A673 (cell line): ENCODE measurements at regions of chr4 and their contacts with region 1.

Region 1: GRCh38 chr4:89024051-89024675 is 32.8 kb downstream of the FAM13A start:
- DNase-seq: peak; percentile 58
- H3K4me3 ChIP-seq: no peak overlapping the region
- H3K27ac ChIP-seq: no peak overlapping the region
- H3K4me1 ChIP-seq: no peaks in the 10 kb centered on the region
- H3K27me3 ChIP-seq: no peaks in the 10 kb centered on the region
- CTCF ChIP-seq: peak; percentile 61

Region 2: DNA sequence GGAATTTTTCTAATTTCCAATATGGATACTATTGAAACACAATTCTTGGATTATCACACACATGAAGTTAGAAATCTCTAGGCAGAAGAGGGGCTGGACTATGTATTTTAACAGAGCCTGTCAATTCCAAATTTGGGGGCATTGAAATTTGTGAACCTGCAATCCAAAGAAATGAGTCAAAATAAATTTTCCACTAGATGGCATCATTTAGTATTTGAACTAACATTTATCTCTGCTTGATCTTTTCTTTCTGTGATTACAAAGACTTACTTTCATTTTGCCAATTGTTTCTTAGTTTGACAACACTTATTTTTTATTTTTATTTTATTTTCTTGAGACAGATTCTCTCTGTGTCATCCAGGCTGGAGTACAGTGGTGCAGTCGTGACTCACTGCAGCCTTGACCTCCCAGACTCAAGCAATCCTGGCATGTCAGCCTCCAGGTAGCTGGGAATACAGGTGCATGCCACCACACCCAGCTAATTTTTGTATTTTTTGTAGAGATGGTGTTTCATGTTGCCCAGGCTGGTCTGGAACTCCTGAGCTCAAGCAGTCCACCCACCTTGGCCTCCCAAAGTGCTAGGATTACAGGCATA is 497.8 kb before region 1 on chr4:
- CTCF ChIA-PET with region 1: no interaction called
- POLR2A ChIA-PET with region 1: no interaction called
- intact Hi-C with region 1: loop called (anchors 5 kb)
- DNase-seq: peak; percentile 14
- H3K4me3 ChIP-seq: no peak overlapping the region
- H3K27ac ChIP-seq: no peak overlapping the region
- H3K4me1 ChIP-seq: no peaks in the 10 kb centered on the region
- H3K27me3 ChIP-seq: no peaks in the 10 kb centered on the region
- CTCF ChIP-seq: peak; percentile 43; the same call in 1 of the 2 replicates

Region 3: DNA sequence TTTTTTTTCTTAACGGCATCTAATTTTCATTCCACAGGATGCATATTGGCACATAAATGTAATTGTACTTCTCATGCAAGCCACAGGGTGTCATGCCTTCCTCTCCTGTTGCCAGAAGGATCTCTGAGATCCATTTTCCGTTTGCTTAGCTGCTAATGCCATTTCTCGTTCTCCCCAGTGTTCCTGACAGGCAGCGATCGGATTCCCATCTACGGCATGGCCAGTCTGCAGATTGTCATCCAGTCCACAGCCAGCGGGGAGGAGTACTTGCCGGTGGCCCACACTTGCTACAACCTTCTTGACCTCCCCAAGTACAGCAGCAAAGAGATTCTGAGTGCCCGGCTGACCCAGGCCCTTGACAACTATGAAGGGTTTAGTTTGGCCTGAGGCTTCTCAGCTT is 317.6 kb before region 1 on chr4:
- CTCF ChIA-PET with region 1: no interaction called
- POLR2A ChIA-PET with region 1: no interaction called
- intact Hi-C with region 1: loop called (anchors 2 kb)
- DNase-seq: peak; percentile 69
- H3K4me3 ChIP-seq: no peak overlapping the region
- H3K27ac ChIP-seq: no peak overlapping the region
- H3K4me1 ChIP-seq: peaks cover 3% of the 10 kb centered on the region
- H3K27me3 ChIP-seq: no peaks in the 10 kb centered on the region
- CTCF ChIP-seq: peak; percentile 59

Region 4: GRCh38 chr4:88818631-88819470 is 205.3 kb before region 1 on chr4:
- CTCF ChIA-PET with region 1: no interaction called
- POLR2A ChIA-PET with region 1: no interaction called
- intact Hi-C with region 1: loop called (anchors 1 kb)
- DNase-seq: peak; percentile 41
- H3K4me3 ChIP-seq: no peak overlapping the region
- H3K27ac ChIP-seq: no peak overlapping the region
- H3K4me1 ChIP-seq: no peaks in the 10 kb centered on the region
- H3K27me3 ChIP-seq: no peaks in the 10 kb centered on the region
- CTCF ChIP-seq: peak; percentile 42; the same call in 1 of the 2 replicates

Region 5: GRCh38 chr4:89382439-89382838 is 358.3 kb after region 1 on chr4:
- CTCF ChIA-PET with region 1: no interaction called
- POLR2A ChIA-PET with region 1: no interaction called
- intact Hi-C with region 1: no loop called
- DNase-seq: no peak
- H3K4me3 ChIP-seq: no peak overlapping the region
- H3K27ac ChIP-seq: no peak overlapping the region
- H3K4me1 ChIP-seq: no peaks in the 10 kb centered on the region
- H3K27me3 ChIP-seq: no peaks in the 10 kb centered on the region
- CTCF ChIP-seq: no peak